Stomach (tissue), 19 donors: ENCODE measurements at regions of chr10 and their contacts with region 1.

Region 1: DNA sequence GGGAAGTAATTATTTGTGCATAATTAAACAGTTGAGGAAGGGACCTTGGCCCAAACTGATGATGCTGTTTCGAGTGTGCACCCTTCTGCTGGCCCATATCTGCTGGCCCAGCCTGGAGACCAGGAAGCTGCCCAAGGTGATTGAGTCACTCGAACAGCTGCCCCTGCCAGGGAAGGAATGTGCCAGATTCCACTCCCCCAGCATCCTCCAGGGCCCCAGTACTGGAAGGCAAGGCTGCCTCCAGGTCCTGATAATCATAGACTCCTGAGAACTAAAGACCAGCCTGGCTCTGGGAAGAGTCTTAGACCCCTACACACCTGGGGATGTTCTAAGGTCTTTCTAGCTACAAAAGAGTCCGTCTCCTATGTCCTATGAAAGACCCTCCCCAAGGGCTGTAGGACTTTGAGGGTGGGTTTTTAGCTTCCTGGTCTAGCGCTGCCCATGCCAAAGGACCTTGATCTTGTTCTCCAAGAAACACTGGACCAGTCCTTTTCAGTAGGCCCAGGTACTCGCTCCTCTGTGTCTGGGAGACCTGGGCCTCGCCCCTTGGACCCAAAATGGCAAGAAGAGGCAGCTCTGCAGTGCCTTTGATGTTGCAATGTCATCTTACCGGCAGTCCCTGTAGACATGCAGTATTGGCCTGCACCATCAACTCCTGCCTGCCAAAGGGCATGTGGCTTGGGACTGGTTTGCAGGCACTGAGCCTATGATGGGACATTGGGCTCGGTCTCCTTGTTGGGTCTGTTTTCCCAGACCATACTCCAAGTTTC is 103.2 kb upstream of the GPR26 start:
- DNase-seq: no peak
- H3K4me3 ChIP-seq: no peak overlapping the region
- H3K27ac ChIP-seq: no peak overlapping the region
- H3K4me1 ChIP-seq: peaks cover 0 to 5% (median 0%) of the 10 kb centered on the region in 4 donors
- H3K27me3 ChIP-seq: peaks cover 0 to 53% (median 0%) of the 10 kb centered on the region in 3 donors
- CTCF ChIP-seq: no peak
- EP300 ChIP-seq: no peak
- POLR2A ChIP-seq: no peak

Region 2: GRCh38 chr10:123043409-123043925 is 519.5 kb before region 1 on chr10:
- intact Hi-C with region 1: loop called (anchors 10 kb)
- DNase-seq: peak; percentile 34 to 85
- H3K4me3 ChIP-seq: no peak overlapping the region
- H3K27ac ChIP-seq: no peak overlapping the region
- H3K4me1 ChIP-seq: no peaks in the 10 kb centered on the region
- H3K27me3 ChIP-seq: no peaks in the 10 kb centered on the region
- CTCF ChIP-seq: peak in 5 of 7 experiments; percentile 26 to 53 (median 44)
- EP300 ChIP-seq: no peak
- POLR2A ChIP-seq: no peak

Region 3: GRCh38 chr10:123135415-123136141 is 427.4 kb before region 1 on chr10 and contains the start of gene HMX3:
- intact Hi-C with region 1: loop called (anchors 2 kb)
- DNase-seq: peak in 1 of 2 donors; percentile 63
- H3K4me3 ChIP-seq: peak within 1 kb of the TSS; percentile 37 to 61 (median 42)
- H3K27ac ChIP-seq: no peak within 1 kb of the TSS
- H3K4me1 ChIP-seq: peaks cover 62 to 73% (median 71%) of the 10 kb centered on the region in 4 donors
- H3K27me3 ChIP-seq: peaks cover 62 to 100% (median 95%) of the 10 kb centered on the region in 3 donors
- CTCF ChIP-seq: no peak
- EP300 ChIP-seq: no peak
- POLR2A ChIP-seq: no peak
- total RNA-seq, gene HMX3: 0.37 TPM in 1 of 5 donors, not detected in the others